Transverse colon (tissue), 4 donors: ENCODE measurements at regions of chrX and their contacts with region 1.

Region 1: GRCh38 chrX:55057675-55058249 is 17.1 kb upstream of the PAGE2B start:
- DNase-seq: no peak
- H3K4me3 ChIP-seq: peak overlapping the region in 1 of 4 donors; percentile 25
- H3K27ac ChIP-seq: no peak overlapping the region
- H3K4me1 ChIP-seq: no peaks in the 10 kb centered on the region
- H3K27me3 ChIP-seq: no peaks in the 10 kb centered on the region
- CTCF ChIP-seq: peak; percentile 60 to 86 (median 67)
- EP300 ChIP-seq: no peak
- POLR2A ChIP-seq: no peak

Region 2: DNA sequence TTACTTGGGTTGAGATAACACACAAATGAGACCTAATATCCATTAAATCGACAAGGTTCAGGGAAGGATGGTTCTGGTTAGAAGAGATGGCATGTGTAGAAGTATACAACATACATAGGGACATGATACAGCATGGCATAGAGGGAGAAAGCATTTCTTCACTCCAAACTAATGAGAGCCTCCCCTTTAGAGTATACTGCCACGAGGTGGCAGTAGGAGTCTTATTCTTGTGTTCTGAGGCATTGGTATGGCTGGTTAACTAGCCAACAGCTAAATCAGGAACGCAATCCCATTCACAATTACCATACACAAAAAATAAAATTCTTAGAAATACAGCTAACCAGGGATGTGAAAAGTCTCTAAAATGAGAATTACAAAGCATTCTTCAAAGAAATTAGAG is 166.2 kb before region 1 on chrX:
- in situ Hi-C with region 1: loop called in 2 of 4 experiments (anchors 10 to 25 kb)
- intact Hi-C with region 1: loop called (anchors 5 kb)
- DNase-seq: peak; percentile 19
- H3K4me3 ChIP-seq: no peak overlapping the region
- H3K27ac ChIP-seq: no peak overlapping the region
- H3K4me1 ChIP-seq: no peaks in the 10 kb centered on the region
- H3K27me3 ChIP-seq: no peaks in the 10 kb centered on the region
- CTCF ChIP-seq: peak; percentile 12 to 46 (median 35)
- EP300 ChIP-seq: no peak
- POLR2A ChIP-seq: no peak